ENCODE measurements at regions of chr10 and their contacts with region 1.

Region 1: DNA sequence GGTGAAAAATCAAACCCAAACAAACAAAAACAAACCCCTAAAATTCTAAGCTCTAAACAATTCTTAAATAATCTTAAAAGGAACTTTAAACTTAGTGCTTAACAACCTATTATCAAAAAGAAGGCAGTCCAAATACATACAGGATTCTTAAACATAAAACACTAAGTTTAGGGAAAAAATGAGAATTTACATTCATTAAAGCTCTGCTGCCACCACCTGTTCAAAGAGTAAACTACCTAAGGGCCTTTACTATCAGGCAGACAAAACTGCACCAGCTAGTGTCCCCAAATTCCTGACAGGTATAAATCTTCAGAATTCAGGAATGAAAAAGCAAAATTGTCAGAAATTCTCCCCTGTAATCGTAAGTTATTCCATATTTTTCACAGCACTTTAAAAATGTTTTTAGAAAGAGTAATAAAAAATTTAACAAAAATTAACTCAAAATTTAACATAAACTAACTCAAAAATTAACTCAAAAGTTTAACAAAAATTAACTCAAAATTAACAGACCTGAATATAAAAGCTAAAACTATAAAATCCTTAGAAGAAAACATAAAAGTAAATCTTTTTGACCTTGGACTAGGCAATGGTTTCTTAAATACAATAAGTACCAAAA is 55.1 kb downstream of the PDZD8 start:
- DNase-seq: no peak
- ATAC-seq: no peak
- H3K4me3 ChIP-seq: no peak overlapping the region
- H3K27ac ChIP-seq: no peak overlapping the region
- H3K4me1 ChIP-seq: peaks cover 0 to 13% (median 0%) of the 10 kb centered on the region in 9 donors
- H3K27me3 ChIP-seq: no peaks in the 10 kb centered on the region
- CTCF ChIP-seq: peak in 7 of 9 donors; percentile 36 to 62 (median 55)

Region 2: DNA sequence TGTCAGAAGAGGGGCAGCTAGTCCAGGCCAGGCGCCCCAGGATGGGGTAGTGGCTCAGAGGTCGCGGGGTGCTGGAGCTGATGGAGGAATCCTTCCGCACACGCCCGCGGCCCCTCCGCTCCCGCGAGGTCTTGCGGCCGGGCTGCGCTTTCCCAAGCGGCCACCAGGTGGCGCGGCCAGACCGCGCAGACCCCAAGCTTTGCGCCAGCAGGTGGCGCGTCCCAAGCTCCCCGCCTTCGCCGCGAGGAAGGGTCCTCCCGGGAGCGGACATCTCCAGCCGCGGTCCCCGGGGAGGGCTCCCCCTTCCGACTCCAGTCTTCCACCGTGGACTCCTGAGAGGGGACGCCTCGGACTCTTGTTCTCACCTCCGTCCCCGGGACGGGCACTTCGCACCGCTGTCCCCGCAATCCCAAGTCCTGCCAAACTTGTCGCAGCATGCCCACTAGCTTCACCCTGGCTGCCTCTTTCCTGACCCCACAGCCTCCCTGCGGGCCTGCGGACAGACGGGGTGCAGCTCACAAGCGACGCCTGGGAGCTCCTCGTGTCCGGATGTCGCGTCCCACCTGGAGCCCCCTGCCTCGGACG is 103.5 kb before region 1 on chr10:
- intact Hi-C with region 1: loop called in 9 of 10 experiments (anchors 2 to 10 kb)
- DNase-seq: peak; percentile 34 to 69
- ATAC-seq: peak; percentile 72 to 94 (median 86)
- H3K4me3 ChIP-seq: peak overlapping the region in 9 of 10 donors; percentile 22 to 56 (median 44)
- H3K27ac ChIP-seq: no peak overlapping the region
- H3K4me1 ChIP-seq: peaks cover 0 to 16% (median 9%) of the 10 kb centered on the region in 9 donors
- H3K27me3 ChIP-seq: peaks cover 0 to 73% (median 59%) of the 10 kb centered on the region in 7 donors
- CTCF ChIP-seq: peak; percentile 99 to 100 (median 100)

Region 3: GRCh38 chr10:117226824-117227451 is 93.2 kb before region 1 on chr10:
- intact Hi-C with region 1: loop called in 1 of 10 experiments (anchors 10 kb)
- DNase-seq: no peak
- ATAC-seq: no peak
- H3K4me3 ChIP-seq: no peak overlapping the region
- H3K27ac ChIP-seq: no peak overlapping the region
- H3K4me1 ChIP-seq: no peaks in the 10 kb centered on the region
- H3K27me3 ChIP-seq: peaks cover 0 to 74% (median 50%) of the 10 kb centered on the region in 7 donors
- CTCF ChIP-seq: peak in 2 of 9 donors; percentile 15 to 46